ENCODE measurements at regions of chr11 and their contacts with region 1.

Region 1: DNA sequence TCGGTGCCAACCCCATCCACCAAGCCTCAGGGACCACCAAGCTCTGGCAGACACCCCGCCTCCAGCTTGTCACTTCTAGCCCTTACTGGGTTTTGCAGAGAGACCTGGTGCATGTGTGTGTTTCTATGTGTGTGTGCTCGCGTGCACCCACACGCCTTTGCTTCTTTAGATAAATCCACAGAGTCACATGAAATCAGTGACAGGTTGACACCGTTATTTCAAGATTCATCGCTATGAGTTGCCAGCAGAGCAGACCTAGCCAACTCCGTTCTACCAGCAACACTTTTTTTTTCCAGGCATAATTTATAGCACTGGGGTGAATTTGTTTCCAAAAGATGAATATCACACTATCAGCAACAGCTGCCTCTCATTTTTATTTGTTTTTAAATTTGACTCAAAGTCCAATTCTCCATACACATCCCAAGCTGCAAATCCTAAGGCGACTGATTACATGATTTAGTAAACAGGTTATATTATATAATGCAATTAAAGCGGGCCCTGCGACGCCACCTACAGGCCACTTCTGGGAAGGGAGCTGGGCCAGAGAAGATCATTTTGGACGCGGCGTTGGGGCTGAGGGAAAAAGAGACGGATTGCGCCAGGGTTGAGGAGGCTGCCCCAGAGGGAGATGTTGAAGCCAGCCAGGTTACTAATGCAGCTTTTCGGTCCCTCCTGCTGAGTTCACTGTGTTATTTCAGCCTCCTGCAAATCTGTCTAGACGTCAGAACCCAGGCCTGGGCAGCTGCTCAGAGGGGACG is 150.5 kb downstream of the FEZ1 start:
- DNase-seq: peak; percentile 82
- ATAC-seq: peak; percentile 57
- H3K4me3 Mint-ChIP-seq: no peak overlapping the region
- H3K27ac Mint-ChIP-seq: no peak overlapping the region
- H3K4me1 Mint-ChIP-seq: peaks cover 57% of the 10 kb centered on the region
- H3K27me3 Mint-ChIP-seq: peaks cover 20% of the 10 kb centered on the region
- CTCF ChIP-seq: peak; percentile 77

Region 2: DNA sequence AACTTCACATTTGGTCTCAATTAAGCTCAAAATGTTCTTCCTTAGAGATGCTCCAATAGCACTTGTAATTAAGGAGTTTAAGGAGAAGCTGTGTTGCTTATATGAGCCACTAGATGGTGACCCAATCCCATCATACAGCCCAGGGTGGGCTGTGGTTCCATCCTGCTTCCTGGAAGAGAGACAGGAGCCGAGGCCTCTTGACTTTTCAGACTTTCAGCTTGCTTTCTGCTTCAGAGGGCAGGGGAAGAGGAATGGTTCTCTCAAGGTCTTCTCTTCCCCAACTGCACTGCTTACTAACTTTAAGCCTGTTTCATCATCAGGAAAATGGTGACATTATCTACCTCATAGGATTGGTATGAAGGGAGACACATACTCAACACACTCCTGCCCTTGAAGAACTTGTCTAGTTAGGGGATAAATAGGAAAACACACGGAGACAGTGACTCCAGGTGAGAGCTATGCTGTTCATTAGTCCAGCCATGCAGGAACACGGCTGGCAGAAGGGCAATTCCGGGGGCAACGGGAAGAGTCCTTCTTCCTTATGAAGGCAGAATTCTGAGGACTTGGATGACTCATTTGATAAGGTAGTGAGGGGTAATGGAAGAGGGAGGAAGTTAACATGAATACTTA is 254.2 kb before region 1 on chr11:
- CTCF ChIA-PET with region 1: interaction called, 85 read pairs
- POLR2A ChIA-PET with region 1: no interaction called
- DNase-seq: peak; percentile 58
- ATAC-seq: peak; percentile 95
- H3K4me3 Mint-ChIP-seq: no peak overlapping the region
- H3K27ac Mint-ChIP-seq: peak overlapping the region; percentile 64
- H3K4me1 Mint-ChIP-seq: peaks cover 25% of the 10 kb centered on the region
- H3K27me3 Mint-ChIP-seq: no peaks in the 10 kb centered on the region
- CTCF ChIP-seq: peak; percentile 25; the same call in 1 of the 2 replicates

Region 3: DNA sequence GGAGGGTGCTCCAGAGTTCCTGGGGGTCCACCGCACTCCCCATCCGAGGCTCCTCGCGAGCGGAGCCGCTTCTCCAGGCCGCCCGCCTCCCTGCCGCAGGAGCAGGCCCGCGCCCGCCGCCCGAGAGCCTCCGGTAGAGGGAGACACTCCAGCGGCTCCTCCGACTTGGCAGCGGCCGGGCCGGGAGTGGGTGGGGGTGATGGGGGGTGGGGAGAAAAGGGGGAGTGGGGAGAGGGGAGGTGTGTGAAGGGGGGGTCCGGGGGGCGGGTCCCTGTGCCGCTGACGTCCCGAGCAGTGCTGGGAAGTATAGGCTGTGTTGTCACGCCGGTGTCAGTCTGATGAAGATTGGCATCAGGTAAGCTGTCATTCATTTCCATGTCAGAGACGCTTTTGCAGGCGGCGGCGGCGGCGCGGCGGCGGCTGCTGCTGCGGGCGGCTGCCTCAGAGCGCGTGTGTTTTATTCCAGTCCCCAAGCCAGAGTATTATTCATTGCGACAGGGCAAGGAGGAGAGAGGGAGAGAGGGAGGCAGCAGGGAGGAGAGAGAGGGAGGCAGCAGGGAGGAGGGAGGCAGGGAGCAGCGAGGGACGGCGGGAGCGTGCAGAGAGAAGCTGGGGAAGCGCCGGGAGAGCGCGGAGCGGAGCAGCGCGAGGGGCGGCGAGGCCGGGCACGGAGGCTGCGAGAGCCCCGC is 181.0 kb before region 1 on chr11 and contains the start of gene PKNOX2:
- CTCF ChIA-PET with region 1: interaction called, 75 read pairs
- POLR2A ChIA-PET with region 1: no interaction called
- DNase-seq: peak; percentile 91
- ATAC-seq: peak; percentile 36
- H3K4me3 Mint-ChIP-seq: peak within 1 kb of the TSS; percentile 84
- H3K27ac Mint-ChIP-seq: peak within 1 kb of the TSS; percentile 95
- H3K4me1 Mint-ChIP-seq: peaks cover 69% of the 10 kb centered on the region
- H3K27me3 Mint-ChIP-seq: peaks cover 58% of the 10 kb centered on the region
- CTCF ChIP-seq: no peak
- total RNA-seq, gene PKNOX2: 1.9 to 3.7 TPM (median 2.3 TPM) in 3 replicates

Region 4: GRCh38 chr11:125263268-125263790 is 82.3 kb before region 1 on chr11:
- CTCF ChIA-PET with region 1: interaction called, 29 read pairs
- POLR2A ChIA-PET with region 1: interaction called, 4 read pairs
- DNase-seq: peak; percentile 88
- ATAC-seq: peak; percentile 77
- H3K4me3 Mint-ChIP-seq: peak overlapping the region; percentile 57
- H3K27ac Mint-ChIP-seq: no peak overlapping the region
- H3K4me1 Mint-ChIP-seq: peaks cover 41% of the 10 kb centered on the region
- H3K27me3 Mint-ChIP-seq: peaks cover 42% of the 10 kb centered on the region
- CTCF ChIP-seq: no peak

Region 5: DNA sequence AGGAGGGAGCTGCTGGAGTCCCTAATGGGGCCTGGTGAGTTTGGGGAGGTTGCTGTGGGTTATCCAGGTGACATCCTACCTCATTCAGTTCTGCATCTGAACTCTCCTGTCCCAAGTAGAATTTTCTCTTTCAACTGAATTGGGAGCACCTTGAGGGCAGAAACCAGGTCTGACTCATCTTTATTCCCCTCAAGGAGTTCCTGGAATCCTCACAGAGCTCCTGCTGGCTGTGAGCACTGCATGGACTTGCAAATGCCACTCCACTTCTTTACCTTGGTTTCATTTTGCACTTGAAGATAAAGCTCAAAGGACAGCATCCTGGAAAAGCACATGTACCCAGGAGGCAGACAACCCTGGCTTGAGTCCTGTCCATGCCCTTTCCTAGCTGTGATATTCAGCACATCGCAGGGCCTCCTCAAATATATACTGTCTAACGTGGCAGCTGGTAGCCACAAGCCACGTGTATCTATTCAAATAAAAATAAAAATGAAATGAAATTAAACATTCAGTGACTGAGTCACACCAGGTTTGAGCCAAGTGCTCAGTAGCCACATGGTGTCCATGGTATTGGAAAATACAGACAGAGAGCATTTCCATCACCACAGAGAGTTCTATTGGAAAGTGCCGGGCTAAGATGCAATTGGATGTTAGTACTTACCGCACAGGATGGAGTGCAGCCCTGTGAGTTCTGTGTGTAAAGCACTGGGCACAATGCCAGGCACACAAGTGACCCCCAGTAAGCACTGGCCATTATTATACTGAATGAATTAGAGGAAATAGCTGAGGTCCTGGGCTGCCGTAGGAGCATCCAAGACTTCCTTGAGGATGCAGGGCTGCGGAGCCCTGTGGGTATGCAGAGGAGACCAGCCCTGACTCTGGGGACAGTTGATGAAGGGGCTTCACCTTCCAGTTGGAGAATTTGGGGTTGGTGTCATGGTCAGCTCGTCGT is 32.1 kb before region 1 on chr11:
- CTCF ChIA-PET with region 1: interaction called, 15 read pairs
- POLR2A ChIA-PET with region 1: no interaction called
- DNase-seq: no peak
- ATAC-seq: peak; percentile 6; the same call in 1 of the 2 replicates
- H3K4me3 Mint-ChIP-seq: no peak overlapping the region
- H3K27ac Mint-ChIP-seq: no peak overlapping the region
- H3K4me1 Mint-ChIP-seq: peaks cover 49% of the 10 kb centered on the region
- H3K27me3 Mint-ChIP-seq: peaks cover 24% of the 10 kb centered on the region
- CTCF ChIP-seq: no peak

Region 6: GRCh38 chr11:125364121-125364826 is 18.7 kb after region 1 on chr11:
- CTCF ChIA-PET with region 1: interaction called, 12 read pairs
- POLR2A ChIA-PET with region 1: interaction called, 3 read pairs
- DNase-seq: no peak
- ATAC-seq: peak; percentile 61
- H3K4me3 Mint-ChIP-seq: no peak overlapping the region
- H3K27ac Mint-ChIP-seq: no peak overlapping the region
- H3K4me1 Mint-ChIP-seq: peaks cover 14% of the 10 kb centered on the region
- H3K27me3 Mint-ChIP-seq: no peaks in the 10 kb centered on the region; the same call in 1 of the 2 replicates
- CTCF ChIP-seq: 0 out of 2 replicates have a peak, but pooled peaks have one; percentile 13

Region 7: GRCh38 chr11:125423247-125423849 is 77.7 kb after region 1 on chr11:
- CTCF ChIA-PET with region 1: interaction called, 52 read pairs
- POLR2A ChIA-PET with region 1: no interaction called
- DNase-seq: no peak
- ATAC-seq: peak; percentile 79
- H3K4me3 Mint-ChIP-seq: no peak overlapping the region
- H3K27ac Mint-ChIP-seq: no peak overlapping the region
- H3K4me1 Mint-ChIP-seq: peaks cover 21% of the 10 kb centered on the region
- H3K27me3 Mint-ChIP-seq: no peaks in the 10 kb centered on the region
- CTCF ChIP-seq: 0 out of 2 replicates have a peak, but pooled peaks have one; percentile 17